Gastrocnemius medialis (tissue), 4 donors: ENCODE measurements at regions of chr5 and their contacts with region 1.

Region 1: GRCh38 chr5:10452768-10453331 is 11.2 kb downstream of the ROPN1L start:
- DNase-seq: no peak
- ATAC-seq: peak; percentile 81 to 83
- H3K4me3 ChIP-seq: no peak overlapping the region
- H3K27ac ChIP-seq: no peak overlapping the region
- H3K4me1 ChIP-seq: peaks cover 0 to 3% of the 10 kb centered on the region in 2 donors
- H3K27me3 ChIP-seq: no peaks in the 10 kb centered on the region
- CTCF ChIP-seq: peak; percentile 52 to 68 (median 64)
- POLR2A ChIP-seq: no peak

Region 2: DNA sequence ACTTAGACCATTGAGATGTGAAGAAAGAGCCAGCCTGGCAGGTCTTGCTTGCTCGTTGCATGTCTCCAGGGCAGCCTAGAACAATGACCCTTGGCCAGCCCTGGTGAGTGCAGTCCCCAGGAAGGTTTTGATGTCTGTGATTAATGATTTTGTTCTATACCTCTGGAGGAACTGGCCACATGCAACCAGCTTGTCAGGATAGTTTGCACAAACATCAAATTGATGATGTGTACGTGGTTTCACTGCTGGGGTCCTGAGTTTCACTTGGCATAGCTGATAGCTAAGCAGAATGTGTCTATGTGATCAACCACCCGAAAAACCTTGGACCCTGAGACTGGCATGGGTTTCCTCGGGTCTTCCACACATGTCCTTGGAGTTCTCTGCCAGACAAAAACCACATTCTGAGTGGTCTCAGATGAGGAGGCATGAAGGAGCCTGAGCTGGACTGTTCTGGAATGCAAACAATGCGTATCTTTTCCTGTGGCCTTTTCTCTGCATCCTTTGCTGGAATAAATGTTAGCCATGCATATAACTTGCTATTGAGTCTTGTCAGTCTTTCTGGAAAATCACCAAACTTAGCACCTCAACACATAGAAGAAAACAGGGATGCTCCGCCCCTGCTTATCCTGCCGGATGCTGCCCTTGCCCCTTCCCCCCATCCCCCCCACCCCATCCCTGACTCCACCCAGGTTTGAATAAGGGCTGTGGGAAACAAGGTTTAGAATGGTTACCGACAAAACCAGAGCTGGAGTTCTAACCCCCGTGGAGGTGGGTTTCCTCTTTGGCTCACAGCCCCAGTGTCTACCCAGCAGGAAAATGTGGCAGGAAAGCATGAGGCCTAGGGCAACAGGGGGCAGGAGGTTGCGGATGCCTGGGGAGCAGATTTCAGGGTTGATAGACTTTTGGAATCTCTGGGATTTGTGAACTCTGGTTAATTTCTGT is 60.9 kb after region 1 on chr5:
- in situ Hi-C with region 1: no loop called
- intact Hi-C with region 1: no loop called
- DNase-seq: no peak
- ATAC-seq: no peak
- H3K4me3 ChIP-seq: no peak overlapping the region
- H3K27ac ChIP-seq: no peak overlapping the region
- H3K4me1 ChIP-seq: no peaks in the 10 kb centered on the region
- H3K27me3 ChIP-seq: no peaks in the 10 kb centered on the region
- CTCF ChIP-seq: no peak
- POLR2A ChIP-seq: no peak

Region 3: GRCh38 chr5:10627160-10627701 is 174.4 kb after region 1 on chr5:
- in situ Hi-C with region 1: loop called (anchors 5 to 10 kb)
- intact Hi-C with region 1: loop called (anchors 1 kb)
- DNase-seq: no peak
- ATAC-seq: peak; percentile 19 to 34
- H3K4me3 ChIP-seq: peak overlapping the region; percentile 29 to 46 (median 42)
- H3K27ac ChIP-seq: peak overlapping the region; percentile 44 to 64 (median 52)
- H3K4me1 ChIP-seq: peaks cover 14 to 18% of the 10 kb centered on the region in 2 donors
- H3K27me3 ChIP-seq: no peaks in the 10 kb centered on the region
- CTCF ChIP-seq: no peak
- POLR2A ChIP-seq: no peak

Region 4: DNA sequence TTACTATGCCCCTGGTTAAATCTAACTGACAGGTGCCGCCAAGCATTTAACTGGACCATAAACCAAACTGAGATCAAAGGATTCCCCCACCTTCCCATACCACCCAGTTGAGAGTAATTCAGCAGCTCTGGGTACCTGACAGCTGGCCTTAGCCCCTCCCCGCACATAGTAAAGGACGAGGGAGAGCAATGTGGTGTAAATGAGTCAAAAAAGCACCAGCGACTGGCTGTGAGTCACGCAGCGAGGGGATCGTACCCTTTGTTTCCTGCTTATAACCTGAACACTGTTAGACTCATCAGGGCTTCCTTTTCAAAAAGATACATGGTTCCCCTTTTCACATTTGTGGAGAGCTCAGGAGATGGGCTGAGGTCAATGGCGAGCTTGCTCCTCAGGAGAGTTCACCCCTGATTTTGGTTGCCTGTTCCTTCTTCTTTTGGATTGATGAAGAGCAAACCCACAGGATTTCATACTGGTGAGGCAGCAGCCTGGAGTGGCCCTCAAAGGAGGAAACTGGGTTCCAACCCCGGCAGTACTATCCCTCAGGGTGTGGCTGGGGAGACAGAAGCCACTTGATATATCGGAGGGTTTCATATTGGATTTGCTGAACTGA is 182.5 kb after region 1 on chr5:
- in situ Hi-C with region 1: loop called in 1 of 4 experiments (anchors 5 kb)
- intact Hi-C with region 1: no loop called
- DNase-seq: no peak
- ATAC-seq: no peak
- H3K4me3 ChIP-seq: no peak overlapping the region
- H3K27ac ChIP-seq: no peak overlapping the region
- H3K4me1 ChIP-seq: no peaks in the 10 kb centered on the region
- H3K27me3 ChIP-seq: no peaks in the 10 kb centered on the region
- CTCF ChIP-seq: no peak
- POLR2A ChIP-seq: no peak